Activated CD8-positive, alpha-beta T cell treated with anti-CD3 and anti-CD28 coated beads for 36 hours (primary cell): ENCODE measurements at regions of chr1 and their contacts with region 1.

Region 1: GRCh38 chr1:16078925-16079656 is 5.6 kb upstream of the FAM131C start:
- DNase-seq: peak; percentile 89
- ATAC-seq: peak; percentile 90
- H3K4me3 Mint-ChIP-seq: peak overlapping the region; percentile 54
- H3K27ac Mint-ChIP-seq: peak overlapping the region; percentile 67
- H3K4me1 Mint-ChIP-seq: peaks cover 8% of the 10 kb centered on the region
- H3K27me3 Mint-ChIP-seq: peaks cover 5% of the 10 kb centered on the region
- CTCF ChIP-seq: peak; percentile 88

Region 2: GRCh38 chr1:16091296-16091695 is 12.2 kb after region 1 on chr1:
- CTCF ChIA-PET with region 1: interaction called, 11 read pairs
- POLR2A ChIA-PET with region 1: interaction called, 3 read pairs
- intact Hi-C with region 1: no loop called
- DNase-seq: no peak
- ATAC-seq: no peak
- H3K4me3 Mint-ChIP-seq: no peak overlapping the region
- H3K27ac Mint-ChIP-seq: no peak overlapping the region
- H3K4me1 Mint-ChIP-seq: no peaks in the 10 kb centered on the region
- H3K27me3 Mint-ChIP-seq: peaks cover under 1% of the 10 kb centered on the region
- CTCF ChIP-seq: no peak

Region 3: DNA sequence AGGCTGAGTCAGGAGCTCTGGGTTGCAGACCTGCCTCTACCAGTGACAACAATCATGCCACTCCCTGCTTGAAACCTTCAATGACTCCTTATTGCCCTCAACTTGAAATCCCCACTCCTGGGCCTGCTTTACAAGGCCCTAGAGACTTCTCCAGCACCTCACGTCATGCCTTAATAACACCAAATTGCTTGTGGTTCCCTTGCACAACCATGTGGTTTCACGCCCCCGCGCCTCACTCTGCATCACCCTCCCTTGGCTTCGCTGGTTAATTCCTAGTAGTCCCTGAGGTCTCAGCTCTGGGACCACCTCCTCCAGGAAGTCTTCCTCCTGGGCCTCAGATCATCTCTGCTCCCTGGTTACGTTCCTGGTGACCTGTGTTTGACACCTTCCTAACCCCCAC is 43.8 kb after region 1 on chr1:
- CTCF ChIA-PET with region 1: interaction called, 16 read pairs
- POLR2A ChIA-PET with region 1: no interaction called
- intact Hi-C with region 1: no loop called
- DNase-seq: peak; percentile 90
- ATAC-seq: peak; percentile 96
- H3K4me3 Mint-ChIP-seq: no peak overlapping the region
- H3K27ac Mint-ChIP-seq: no peak overlapping the region
- H3K4me1 Mint-ChIP-seq: peaks cover 11% of the 10 kb centered on the region
- H3K27me3 Mint-ChIP-seq: no peaks in the 10 kb centered on the region
- CTCF ChIP-seq: no peak

Region 4: DNA sequence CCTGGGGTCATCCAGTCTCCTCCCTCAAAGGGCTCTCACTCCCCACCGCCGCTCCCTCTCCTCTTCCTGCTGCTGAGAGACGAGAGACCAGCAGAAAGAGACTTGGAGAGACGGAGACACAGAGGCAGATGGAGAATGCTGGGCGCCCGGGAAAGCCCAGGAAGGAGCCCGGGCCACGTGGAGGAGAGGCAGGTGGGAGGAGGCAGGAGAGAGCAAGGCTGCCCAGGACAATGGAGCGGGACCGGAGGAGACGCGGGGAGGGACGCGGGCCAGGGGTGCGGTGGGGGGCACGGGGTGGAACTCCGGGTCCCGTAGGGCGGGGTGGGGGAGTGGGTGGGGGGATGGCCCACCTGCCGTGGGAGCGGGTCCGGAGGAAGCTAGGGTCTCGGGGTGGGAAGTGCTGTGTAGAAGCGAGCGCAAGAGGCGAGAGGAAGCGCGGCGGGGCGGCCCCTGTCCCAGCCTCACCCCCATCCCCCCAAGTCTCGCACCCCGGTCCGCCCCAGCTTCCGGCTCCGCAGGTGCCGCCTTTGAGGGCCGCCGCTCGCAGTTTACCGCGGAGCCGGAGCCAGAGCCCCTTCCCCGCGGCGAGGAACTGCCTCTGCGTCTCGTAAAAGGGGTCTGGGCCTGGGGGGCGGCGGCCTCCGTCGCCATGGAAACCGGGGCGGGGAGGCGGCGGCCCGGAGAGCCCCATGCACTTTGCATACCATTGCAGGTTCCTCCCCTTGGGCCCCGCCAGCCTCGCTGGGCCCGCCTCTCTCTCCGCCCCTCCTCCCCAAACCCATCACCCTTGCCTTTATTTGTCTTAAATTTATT is 88.4 kb after region 1 on chr1:
- CTCF ChIA-PET with region 1: interaction called, 19 read pairs
- POLR2A ChIA-PET with region 1: no interaction called
- intact Hi-C with region 1: no loop called
- DNase-seq: peak; percentile 75
- ATAC-seq: peak; percentile 77
- H3K4me3 Mint-ChIP-seq: peak overlapping the region; percentile 60
- H3K27ac Mint-ChIP-seq: no peak overlapping the region
- H3K4me1 Mint-ChIP-seq: peaks cover 42% of the 10 kb centered on the region
- H3K27me3 Mint-ChIP-seq: peaks cover 9% of the 10 kb centered on the region
- CTCF ChIP-seq: no peak

Region 5: GRCh38 chr1:16187748-16188401 is 108.8 kb after region 1 on chr1:
- CTCF ChIA-PET with region 1: interaction called, 299 read pairs
- POLR2A ChIA-PET with region 1: interaction called, 5 read pairs
- intact Hi-C with region 1: loop called (anchors 1 kb)
- DNase-seq: peak; percentile 83
- ATAC-seq: peak; percentile 97
- H3K4me3 Mint-ChIP-seq: no peak overlapping the region
- H3K27ac Mint-ChIP-seq: no peak overlapping the region
- H3K4me1 Mint-ChIP-seq: peaks cover 4% of the 10 kb centered on the region
- H3K27me3 Mint-ChIP-seq: peaks cover 6% of the 10 kb centered on the region
- CTCF ChIP-seq: peak; percentile 91

Region 6: GRCh38 chr1:16243936-16244649 is 165.0 kb after region 1 on chr1:
- CTCF ChIA-PET with region 1: interaction called, 19 read pairs
- POLR2A ChIA-PET with region 1: no interaction called
- intact Hi-C with region 1: no loop called
- DNase-seq: peak; percentile 89
- ATAC-seq: peak; percentile 94
- H3K4me3 Mint-ChIP-seq: no peak overlapping the region
- H3K27ac Mint-ChIP-seq: no peak overlapping the region
- H3K4me1 Mint-ChIP-seq: peaks cover 5% of the 10 kb centered on the region
- H3K27me3 Mint-ChIP-seq: no peaks in the 10 kb centered on the region
- CTCF ChIP-seq: peak; percentile 87